HepG2 (cell line): ENCODE measurements at regions of chr13 and their contacts with region 1.

Region 1: DNA sequence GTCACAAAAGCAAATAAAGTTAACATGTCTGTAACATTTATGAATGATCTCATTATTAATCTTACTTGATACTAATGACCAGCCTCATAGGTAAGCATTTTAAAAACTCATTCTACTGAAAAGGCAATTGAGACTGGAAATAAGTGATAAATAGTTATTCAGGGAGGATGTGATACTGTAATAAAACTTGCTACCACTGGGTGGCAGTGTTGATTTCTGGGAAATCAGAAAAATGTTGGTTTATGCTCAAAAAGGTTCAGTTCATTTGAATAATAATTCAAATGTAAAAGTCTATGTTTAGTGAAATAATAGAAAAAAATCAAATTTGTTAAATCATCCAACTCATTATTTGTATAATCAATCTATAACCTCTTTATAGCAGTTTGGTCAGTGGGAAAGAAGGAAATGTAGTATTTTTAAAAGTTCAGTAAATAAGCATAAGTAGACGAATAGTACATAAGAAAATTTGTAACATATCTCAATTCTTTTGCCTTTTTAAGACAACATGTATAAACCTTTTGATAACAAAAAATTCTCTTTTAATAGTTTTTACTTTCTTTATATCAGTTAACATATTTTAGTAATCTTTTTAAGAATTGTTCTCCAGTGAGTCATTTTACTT is 9.6 kb downstream of the ABHD13 start:
- DNase-seq: peak; percentile 21
- ATAC-seq: no peak
- H3K4me3 ChIP-seq: no peak overlapping the region
- H3K27ac ChIP-seq: no peak overlapping the region
- H3K4me1 ChIP-seq: peaks cover 31% of the 10 kb centered on the region
- H3K27me3 ChIP-seq: no peaks in the 10 kb centered on the region
- CTCF ChIP-seq: peak; percentile 58
- EP300 ChIP-seq: no peak
- POLR2A ChIP-seq: no peak
- RAD21 ChIP-seq: no peak

Region 2: DNA sequence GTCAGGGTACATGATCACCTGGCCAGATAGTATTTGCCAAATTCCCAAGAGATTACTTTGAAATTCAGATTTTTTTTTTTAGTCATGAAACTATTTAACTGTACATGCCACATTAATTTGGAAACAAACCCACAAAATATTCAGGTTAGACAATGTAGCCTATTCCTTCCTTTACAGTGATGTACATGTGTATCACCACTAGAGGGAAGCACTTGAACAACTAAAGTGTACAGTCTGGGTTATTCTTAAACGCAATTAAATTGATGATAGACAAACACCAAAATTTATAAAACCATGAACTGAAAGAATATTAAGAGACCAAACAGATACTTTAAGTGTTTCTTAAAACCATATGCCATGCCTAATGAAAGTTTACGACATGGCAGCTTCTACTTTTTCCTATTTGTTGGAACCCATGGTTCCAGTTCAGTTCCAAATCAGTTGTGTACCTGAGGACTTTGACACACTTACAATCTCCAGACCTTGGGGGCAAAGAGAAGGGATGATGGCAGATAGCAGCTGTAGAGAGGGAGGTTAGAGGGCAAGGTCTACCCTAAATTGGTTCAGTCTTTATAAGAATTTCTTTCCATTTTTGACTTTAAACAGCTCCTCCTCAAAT is 94.6 kb after region 1 on chr13:
- CTCF ChIA-PET with region 1: interaction called, 3 read pairs
- POLR2A ChIA-PET with region 1: no interaction called
- in situ Hi-C with region 1: no loop called
- intact Hi-C with region 1: loop called (anchors 5 kb)
- DNase-seq: peak; percentile 23
- ATAC-seq: peak; percentile 84
- H3K4me3 ChIP-seq: no peak overlapping the region
- H3K27ac ChIP-seq: no peak overlapping the region
- H3K4me1 ChIP-seq: no peaks in the 10 kb centered on the region
- H3K27me3 ChIP-seq: no peaks in the 10 kb centered on the region
- CTCF ChIP-seq: peak; percentile 70
- EP300 ChIP-seq: no peak
- POLR2A ChIP-seq: no peak
- RAD21 ChIP-seq: 0 out of 2 replicates have a peak, but pooled peaks have one; percentile 16

Region 3: DNA sequence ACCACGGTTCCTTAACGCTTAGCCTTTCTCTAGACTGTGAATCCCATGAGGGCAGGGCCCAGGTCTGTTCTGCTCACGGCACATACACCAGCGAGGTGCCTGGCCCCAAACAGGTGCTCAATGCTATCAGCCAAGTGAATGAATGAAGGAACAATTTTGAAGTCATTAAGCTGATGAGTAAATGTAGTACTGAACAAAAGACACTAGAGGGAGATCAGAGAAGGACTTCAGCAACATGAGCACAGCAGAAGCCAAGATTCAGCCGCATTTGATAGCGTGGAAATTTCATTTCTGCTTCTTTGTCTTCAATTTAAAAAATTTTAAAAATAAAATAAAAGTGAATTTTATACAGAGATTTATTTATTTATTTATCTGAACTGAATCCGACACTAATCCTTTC is 381.6 kb after region 1 on chr13:
- CTCF ChIA-PET with region 1: no interaction called
- POLR2A ChIA-PET with region 1: no interaction called
- in situ Hi-C with region 1: no loop called
- intact Hi-C with region 1: no loop called
- DNase-seq: no peak
- ATAC-seq: peak; percentile 38; the same call in 1 of the 3 replicates
- H3K4me3 ChIP-seq: no peak overlapping the region
- H3K27ac ChIP-seq: no peak overlapping the region
- H3K4me1 ChIP-seq: no peaks in the 10 kb centered on the region
- H3K27me3 ChIP-seq: no peaks in the 10 kb centered on the region
- CTCF ChIP-seq: 0 out of 2 replicates have a peak, but pooled peaks have one; percentile 4
- EP300 ChIP-seq: no peak
- POLR2A ChIP-seq: no peak
- RAD21 ChIP-seq: no peak